ENCODE measurements at regions of chr17 and their contacts with region 1.

Region 1: GRCh38 chr17:16363749-16364536 is 10.7 kb upstream of the CENPV start:
- DNase-seq: no peak
- H3K4me3 ChIP-seq: no peak overlapping the region
- CTCF ChIP-seq: peak; percentile 79

Region 2: DNA sequence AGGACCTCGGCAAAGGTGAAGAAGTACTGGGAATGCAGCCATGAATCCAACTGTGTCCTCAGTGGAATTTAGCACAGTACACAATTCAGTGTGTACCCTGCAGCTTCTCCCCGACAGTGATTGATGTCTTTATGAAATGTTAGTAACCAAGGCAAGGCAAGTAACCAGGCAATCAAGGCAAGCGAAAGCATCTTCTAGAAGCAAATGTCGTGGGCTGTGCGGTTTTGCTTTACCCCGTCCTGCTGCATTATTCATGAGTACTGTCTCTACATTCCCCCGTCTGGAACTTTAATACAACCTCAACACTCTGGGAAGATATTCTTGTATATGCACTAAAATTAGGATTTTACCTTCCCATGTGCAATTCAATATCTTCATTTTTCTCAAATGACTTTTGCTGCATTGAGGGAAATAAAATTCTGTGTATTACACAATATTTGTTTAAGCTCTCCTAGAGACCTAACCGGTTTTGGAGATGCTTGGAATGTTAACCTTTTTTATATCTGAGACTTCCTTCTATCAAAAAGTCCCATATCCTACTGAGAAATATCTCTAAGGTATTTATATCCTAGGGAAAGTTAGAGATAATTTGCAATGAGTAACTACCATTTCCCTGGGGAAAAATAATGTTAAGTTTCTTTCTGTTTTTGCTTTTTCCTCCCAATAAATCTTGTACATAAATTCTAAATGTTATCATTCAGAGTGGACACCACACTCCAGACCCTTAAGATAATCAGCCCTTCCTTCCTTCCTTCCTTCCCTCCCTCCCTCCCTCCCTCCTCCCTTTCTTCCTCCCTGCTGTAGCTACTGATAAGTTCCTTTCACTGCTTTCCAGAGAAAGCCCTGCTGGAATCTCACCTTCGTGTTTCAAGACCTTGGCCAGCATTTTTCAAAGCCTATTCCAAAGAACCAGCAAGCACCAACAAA is 470.9 kb before region 1 on chr17:
- CTCF ChIA-PET with region 1: no interaction called
- POLR2A ChIA-PET with region 1: no interaction called
- DNase-seq: no peak
- H3K4me3 ChIP-seq: no peak overlapping the region
- CTCF ChIP-seq: no peak

Region 3: DNA sequence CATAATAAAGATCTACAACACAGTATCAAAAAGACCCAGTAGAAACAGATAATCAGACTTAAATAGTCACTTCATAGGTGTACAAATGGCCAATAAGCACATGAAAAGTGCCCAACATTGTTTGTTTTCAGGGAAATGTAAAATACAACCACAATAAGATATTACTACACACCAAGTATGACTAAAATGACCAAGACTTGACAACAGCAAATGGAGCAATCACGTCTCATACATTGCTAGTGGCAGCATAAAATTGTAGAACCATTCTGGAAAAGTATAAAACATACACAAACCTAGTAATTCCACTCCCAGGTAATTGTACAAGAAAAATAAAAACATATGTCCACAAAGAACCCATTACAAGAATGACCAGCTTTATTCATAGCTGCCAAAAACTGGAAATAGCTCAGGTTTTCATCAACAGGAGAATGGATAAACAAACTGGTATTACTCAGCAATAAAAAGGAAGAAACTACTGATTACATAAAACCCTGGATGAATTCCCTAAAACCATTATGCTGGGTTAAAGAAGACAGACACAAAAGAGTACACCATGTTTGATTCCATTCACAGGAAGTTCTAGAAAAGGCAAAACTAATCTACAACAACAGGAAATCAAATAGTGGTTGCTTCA is 278.8 kb before region 1 on chr17:
- CTCF ChIA-PET with region 1: no interaction called
- POLR2A ChIA-PET with region 1: no interaction called
- DNase-seq: peak; percentile 16
- H3K4me3 ChIP-seq: no peak overlapping the region
- CTCF ChIP-seq: no peak

Region 4: GRCh38 chr17:16325964-16326363 is 38.0 kb before region 1 on chr17:
- CTCF ChIA-PET with region 1: interaction called, 17 read pairs
- POLR2A ChIA-PET with region 1: no interaction called
- DNase-seq: no peak
- H3K4me3 ChIP-seq: no peak overlapping the region
- CTCF ChIP-seq: no peak

Region 5: GRCh38 chr17:16342979-16343378 is 21.0 kb before region 1 on chr17:
- CTCF ChIA-PET with region 1: interaction called, 31 read pairs
- POLR2A ChIA-PET with region 1: no interaction called
- DNase-seq: no peak
- H3K4me3 ChIP-seq: no peak overlapping the region
- CTCF ChIP-seq: no peak

Region 6: DNA sequence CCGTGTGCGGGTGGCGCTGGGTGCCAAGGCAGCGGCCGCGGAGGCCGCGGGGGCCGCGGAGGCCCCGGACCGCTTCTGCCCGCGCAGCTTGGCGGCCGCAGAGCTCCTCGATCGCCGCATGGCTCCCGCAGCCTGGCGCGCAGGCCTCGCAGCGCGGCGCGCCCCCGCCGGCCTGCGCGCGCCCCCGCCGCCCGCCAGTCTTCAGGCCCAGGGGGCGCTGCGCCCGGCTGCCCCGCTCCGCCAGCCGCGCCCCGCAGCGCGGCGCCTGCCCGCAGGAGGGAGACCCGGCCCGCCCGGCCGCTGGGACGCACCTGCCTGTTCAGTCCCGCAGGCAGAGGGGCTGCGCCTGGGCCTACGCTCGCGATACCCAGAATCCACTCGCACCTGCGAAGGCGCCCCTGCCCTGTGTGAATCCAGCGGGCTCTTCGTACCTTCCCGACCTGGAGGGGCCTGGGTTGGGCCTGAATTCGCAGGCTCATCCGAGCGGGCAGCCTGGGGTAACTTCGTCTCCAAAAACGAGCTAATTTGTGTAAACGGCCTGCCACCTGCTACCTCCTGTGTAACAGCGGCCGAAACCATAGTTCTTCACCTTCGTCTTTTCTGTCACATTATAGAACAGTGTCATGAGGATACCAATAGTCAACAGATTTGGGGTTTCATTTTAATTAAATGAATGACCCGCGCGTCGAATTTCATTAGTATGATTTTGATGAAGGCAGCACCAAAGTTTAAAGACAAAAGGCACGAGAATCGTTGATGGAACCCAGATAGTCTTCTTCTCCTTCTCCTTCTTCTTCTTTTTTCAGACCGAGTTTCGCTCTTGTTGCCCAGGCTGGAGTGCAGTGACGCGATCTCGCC is 10.4 kb before region 1 on chr17 and contains the start of gene CENPV:
- CTCF ChIA-PET with region 1: interaction called, 141 read pairs
- POLR2A ChIA-PET with region 1: interaction called, 3 read pairs
- DNase-seq: no peak
- H3K4me3 ChIP-seq: peak within 1 kb of the TSS; percentile 67
- CTCF ChIP-seq: no peak

Region 7: GRCh38 chr17:16415031-16415924 is 51.3 kb after region 1 on chr17 and contains the start of gene TRPV2:
- CTCF ChIA-PET with region 1: interaction called, 10 read pairs
- POLR2A ChIA-PET with region 1: no interaction called
- DNase-seq: no peak
- H3K4me3 ChIP-seq: peak within 1 kb of the TSS; percentile 64
- CTCF ChIP-seq: peak; percentile 22

Region 8: GRCh38 chr17:16438557-16439302 is 74.8 kb after region 1 on chr17:
- CTCF ChIA-PET with region 1: interaction called, 14 read pairs
- POLR2A ChIA-PET with region 1: interaction called, 6 read pairs
- DNase-seq: peak; percentile 99
- H3K4me3 ChIP-seq: peak overlapping the region; percentile 96
- CTCF ChIP-seq: no peak